MCF 10A (cell line): ENCODE measurements at regions of chr12 and their contacts with region 1.

Region 1: GRCh38 chr12:50400598-50401364 is at the start of gene LARP4:
- DNase-seq: peak; percentile 96
- H3K4me3 Mint-ChIP-seq: peak within 1 kb of the TSS; percentile 97
- H3K27ac Mint-ChIP-seq: peak within 1 kb of the TSS; percentile 89
- H3K4me1 Mint-ChIP-seq: peaks cover 7% of the 10 kb centered on the region
- H3K27me3 Mint-ChIP-seq: no peaks in the 10 kb centered on the region
- CTCF ChIP-seq: no peak
- total RNA-seq, gene LARP4: 73.6 and 78.8 TPM in 2 replicates

Region 2: GRCh38 chr12:50211392-50212070 is 189.2 kb before region 1 on chr12:
- CTCF ChIA-PET with region 1: interaction called, 3 read pairs
- POLR2A ChIA-PET with region 1: interaction called, 19 read pairs
- intact Hi-C with region 1: no loop called
- DNase-seq: no peak
- H3K4me3 Mint-ChIP-seq: no peak overlapping the region
- H3K27ac Mint-ChIP-seq: peak overlapping the region; percentile 92
- H3K4me1 Mint-ChIP-seq: peaks cover 23% of the 10 kb centered on the region
- H3K27me3 Mint-ChIP-seq: no peaks in the 10 kb centered on the region
- CTCF ChIP-seq: no peak

Region 3: GRCh38 chr12:50326636-50327284 is 74.0 kb before region 1 on chr12:
- CTCF ChIA-PET with region 1: no interaction called
- POLR2A ChIA-PET with region 1: interaction called, 9 read pairs
- intact Hi-C with region 1: loop called (anchors 5 kb)
- DNase-seq: peak; percentile 90
- H3K4me3 Mint-ChIP-seq: peak overlapping the region; percentile 51
- H3K27ac Mint-ChIP-seq: peak overlapping the region; percentile 51
- H3K4me1 Mint-ChIP-seq: peaks cover 17% of the 10 kb centered on the region
- H3K27me3 Mint-ChIP-seq: no peaks in the 10 kb centered on the region
- CTCF ChIP-seq: no peak

Region 4: GRCh38 chr12:50411051-50411660 is 10.4 kb after region 1 on chr12:
- CTCF ChIA-PET with region 1: interaction called, 3 read pairs
- POLR2A ChIA-PET with region 1: interaction called, 12 read pairs
- intact Hi-C with region 1: no loop called
- DNase-seq: peak; percentile 28
- H3K4me3 Mint-ChIP-seq: no peak overlapping the region
- H3K27ac Mint-ChIP-seq: no peak overlapping the region
- H3K4me1 Mint-ChIP-seq: no peaks in the 10 kb centered on the region
- H3K27me3 Mint-ChIP-seq: no peaks in the 10 kb centered on the region
- CTCF ChIP-seq: no peak

Region 5: DNA sequence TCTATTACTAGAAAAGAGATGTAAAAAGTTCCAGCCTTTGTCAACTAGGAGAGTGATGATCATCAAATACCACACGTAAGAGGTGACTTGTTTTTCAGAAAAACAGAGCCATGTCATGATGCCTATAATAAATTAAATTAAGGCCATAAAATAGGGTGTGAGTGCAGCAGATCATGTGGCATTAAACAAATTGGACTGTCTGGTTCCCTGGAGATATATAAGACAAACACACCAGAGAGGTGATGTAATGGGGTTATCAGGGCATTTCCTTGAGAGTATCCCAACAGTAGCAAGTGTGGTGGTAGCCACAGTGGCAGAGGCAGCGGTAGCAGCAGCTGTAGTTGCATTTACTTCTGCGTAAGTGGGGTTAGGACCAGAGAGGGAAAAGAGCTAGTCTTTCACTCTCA is 1005.0 kb after region 1 on chr12:
- CTCF ChIA-PET with region 1: no interaction called
- POLR2A ChIA-PET with region 1: no interaction called
- intact Hi-C with region 1: no loop called
- DNase-seq: no peak
- H3K4me3 Mint-ChIP-seq: no peak overlapping the region
- H3K27ac Mint-ChIP-seq: no peak overlapping the region
- H3K4me1 Mint-ChIP-seq: no peaks in the 10 kb centered on the region
- H3K27me3 Mint-ChIP-seq: no peaks in the 10 kb centered on the region
- CTCF ChIP-seq: no peak